ENCODE measurements at regions of chr1 and their contacts with region 1.

Region 1: GRCh38 chr1:171741872-171742576 is at the start of gene VAMP4:
- DNase-seq: no peak
- H3K4me3 ChIP-seq: peak within 1 kb of the TSS; percentile 71 to 98
- H3K27ac ChIP-seq: peak within 1 kb of the TSS; percentile 97
- H3K4me1 ChIP-seq: peaks cover 24% of the 10 kb centered on the region
- H3K27me3 ChIP-seq: no peaks in the 10 kb centered on the region
- CTCF ChIP-seq: no peak
- POLR2A ChIP-seq: peak; percentile 77 to 94
- total RNA-seq, gene VAMP4: 8.1 TPM

Region 2: DNA sequence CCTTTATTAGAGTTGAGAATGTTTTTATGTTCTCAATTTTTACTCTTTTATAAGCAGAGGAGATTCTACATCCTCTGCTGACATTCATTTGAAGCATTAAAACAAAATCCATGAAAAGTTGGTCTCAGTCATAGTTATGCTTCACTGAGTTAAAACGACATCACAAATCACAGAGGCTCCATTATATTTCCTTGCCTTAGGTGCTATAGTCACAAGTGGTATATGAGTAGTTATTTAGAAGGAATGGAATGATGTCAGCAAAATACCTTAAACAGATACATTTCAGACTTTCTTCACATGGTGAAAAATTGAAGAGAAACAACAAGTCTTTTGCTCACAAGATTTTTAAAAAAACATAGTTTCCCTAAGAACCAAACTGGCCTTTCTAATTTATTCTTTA is 27.7 kb after region 1 on chr1:
- intact Hi-C with region 1: no loop called
- DNase-seq: no peak
- H3K4me3 ChIP-seq: no peak overlapping the region
- H3K27ac ChIP-seq: no peak overlapping the region
- H3K4me1 ChIP-seq: no peaks in the 10 kb centered on the region
- H3K27me3 ChIP-seq: no peaks in the 10 kb centered on the region
- CTCF ChIP-seq: no peak
- POLR2A ChIP-seq: no peak

Region 3: GRCh38 chr1:171781176-171781875 is 39.3 kb after region 1 on chr1 and contains the start of gene METTL13:
- intact Hi-C with region 1: loop called (anchors 2 kb)
- DNase-seq: peak; percentile 99 to 100
- H3K4me3 ChIP-seq: peak within 1 kb of the TSS; percentile 86 to 93
- H3K27ac ChIP-seq: peak within 1 kb of the TSS; percentile 86
- H3K4me1 ChIP-seq: peaks cover 30% of the 10 kb centered on the region
- H3K27me3 ChIP-seq: no peaks in the 10 kb centered on the region
- CTCF ChIP-seq: no peak
- POLR2A ChIP-seq: peak; percentile 38 to 95
- total RNA-seq, gene METTL13: 15.5 TPM

Region 4: DNA sequence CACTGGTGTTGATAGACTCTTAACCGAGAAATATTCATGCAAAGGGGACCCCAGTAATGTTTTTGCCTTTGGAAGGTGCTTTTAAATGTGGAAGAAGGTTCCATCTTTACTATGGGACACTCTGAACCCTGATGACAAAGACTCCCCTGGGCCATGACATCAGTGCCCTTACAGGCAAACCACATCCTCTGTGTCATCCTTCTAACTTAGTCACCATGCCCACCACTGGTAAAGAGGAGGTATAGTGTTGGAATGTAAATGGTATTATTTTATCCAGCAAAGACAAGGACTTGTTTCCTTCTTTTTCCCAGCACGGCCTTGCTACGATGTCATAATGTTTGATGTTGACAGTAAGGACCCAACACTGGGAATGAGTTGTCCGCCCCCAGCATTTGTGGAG is 52.1 kb after region 1 on chr1:
- intact Hi-C with region 1: no loop called
- DNase-seq: no peak
- H3K4me3 ChIP-seq: no peak overlapping the region
- H3K27ac ChIP-seq: no peak overlapping the region
- H3K4me1 ChIP-seq: no peaks in the 10 kb centered on the region
- H3K27me3 ChIP-seq: no peaks in the 10 kb centered on the region
- CTCF ChIP-seq: no peak
- POLR2A ChIP-seq: no peak

Measured in vagina (tissue), 2 donors.